ENCODE measurements at regions of chr1 and their contacts with region 1.

Region 1: DNA sequence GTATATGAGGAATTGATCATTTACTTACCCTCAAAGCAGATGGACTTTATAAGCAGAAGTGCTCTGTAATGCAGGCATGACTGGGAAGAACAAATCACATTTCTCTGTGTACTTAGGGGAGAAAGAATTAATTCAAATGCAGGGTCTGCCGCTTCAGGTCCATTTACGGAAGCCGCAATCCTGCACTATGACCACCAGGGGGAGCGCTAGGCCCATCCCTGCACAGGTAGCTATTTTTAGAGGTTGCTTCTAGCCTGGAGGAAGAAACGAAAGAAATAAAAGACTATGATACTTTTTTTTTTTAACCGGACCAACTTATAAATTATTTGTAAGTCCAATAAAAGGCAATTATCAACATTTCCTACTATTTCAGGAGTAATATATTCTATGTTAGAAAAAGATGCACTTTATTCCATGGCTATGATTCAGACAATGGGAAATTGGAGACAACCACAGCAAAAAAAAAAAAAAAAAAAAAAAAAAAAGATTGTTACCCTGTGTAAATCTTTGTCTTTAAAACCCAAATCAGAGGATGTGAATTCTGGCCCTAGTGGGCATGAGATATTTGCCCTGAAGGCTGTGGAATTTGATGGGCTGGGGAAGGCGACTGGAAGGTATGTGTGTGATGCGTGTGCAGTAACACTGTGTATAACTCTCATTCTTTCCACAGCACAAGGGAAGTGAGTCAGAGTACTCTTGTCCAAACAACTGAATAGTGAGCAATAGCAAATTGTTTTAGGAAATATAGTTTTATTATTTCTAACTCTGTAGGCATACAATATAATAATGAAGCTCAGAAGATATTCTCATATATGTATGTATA is 12.9 kb upstream of the FYB2 start:
- DNase-seq: peak; percentile 29
- ATAC-seq: peak; percentile 79
- H3K4me3 ChIP-seq: no peak overlapping the region
- H3K27ac ChIP-seq: no peak overlapping the region
- H3K4me1 ChIP-seq: peaks cover 0 to 3% of the 10 kb centered on the region in 2 experiments; a peak in 1 of 4 replicates
- H3K27me3 ChIP-seq: peaks cover 17% of the 10 kb centered on the region; the same call in 1 of the 2 replicates
- CTCF ChIP-seq: peak; percentile 65 to 96 (median 91)
- POLR2A ChIP-seq: no peak
- RAD21 ChIP-seq: peak; percentile 91

Region 2: DNA sequence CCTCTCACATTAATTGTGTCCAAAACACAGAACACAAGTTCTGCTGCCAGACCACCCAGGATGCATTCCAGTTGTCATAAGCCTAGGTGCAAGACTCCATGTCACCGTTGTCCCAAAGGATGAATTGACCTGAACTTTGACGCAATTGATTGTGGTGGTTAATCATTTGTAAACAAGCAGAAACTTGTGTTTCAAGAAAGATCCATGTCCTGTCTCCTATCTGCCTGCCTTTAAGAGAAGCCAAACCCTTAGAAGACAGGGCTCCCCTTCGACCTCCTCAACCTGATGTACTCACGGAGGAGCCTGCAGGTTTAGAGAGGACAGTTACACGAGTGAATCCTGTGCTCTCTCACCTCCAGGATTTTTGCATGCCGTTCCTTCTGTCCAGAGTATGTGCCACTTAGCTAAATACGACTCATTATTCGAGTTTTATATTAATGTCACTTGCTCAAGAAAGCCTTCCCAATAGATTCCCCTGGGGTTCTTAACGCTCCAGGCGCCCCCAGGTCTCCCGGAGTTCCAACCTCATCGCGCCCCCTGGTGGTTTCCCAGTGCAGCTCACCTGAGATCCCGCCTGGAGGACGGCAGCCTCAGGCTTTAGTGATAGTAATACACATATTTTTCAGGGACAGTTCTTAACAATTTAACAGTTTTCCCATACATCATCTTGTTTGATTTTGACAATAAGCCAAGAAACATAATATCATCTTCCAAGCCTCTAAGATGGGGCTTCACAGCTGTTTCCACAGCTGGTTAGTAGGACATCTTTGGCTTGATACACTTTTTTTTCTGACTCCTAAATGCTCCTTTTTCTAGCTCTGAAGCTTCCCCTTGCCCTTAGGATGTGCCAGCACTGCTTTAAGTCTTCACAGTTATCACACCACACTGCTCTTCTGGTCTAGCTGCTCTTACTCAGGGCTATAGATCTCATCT is 136.1 kb after region 1 on chr1:
- CTCF ChIA-PET with region 1: interaction called, 10 read pairs
- POLR2A ChIA-PET with region 1: no interaction called
- RAD21 ChIA-PET with region 1: no interaction called
- intact Hi-C with region 1: loop called (anchors 1 kb)
- DNase-seq: peak; percentile 7
- ATAC-seq: peak; percentile 69
- H3K4me3 ChIP-seq: no peak overlapping the region
- H3K27ac ChIP-seq: no peak overlapping the region
- H3K4me1 ChIP-seq: no peaks in the 10 kb centered on the region
- H3K27me3 ChIP-seq: peaks cover 8% of the 10 kb centered on the region; the same call in 1 of the 2 replicates
- CTCF ChIP-seq: peak in 2 of 3 experiments; percentile 72 to 82; a peak in 4 of 6 replicates
- POLR2A ChIP-seq: no peak
- RAD21 ChIP-seq: peak; percentile 45

Region 3: GRCh38 chr1:58047265-58047858 is 1215.3 kb after region 1 on chr1:
- CTCF ChIA-PET with region 1: no interaction called
- POLR2A ChIA-PET with region 1: no interaction called
- RAD21 ChIA-PET with region 1: no interaction called
- intact Hi-C with region 1: loop called (anchors 1 kb)
- DNase-seq: no peak
- ATAC-seq: peak; percentile 79
- H3K4me3 ChIP-seq: no peak overlapping the region
- H3K27ac ChIP-seq: no peak overlapping the region
- H3K4me1 ChIP-seq: no peaks in the 10 kb centered on the region
- H3K27me3 ChIP-seq: peaks cover 8% of the 10 kb centered on the region; the same call in 1 of the 2 replicates
- CTCF ChIP-seq: peak; percentile 20 to 82 (median 78); a peak in 5 of 6 replicates
- POLR2A ChIP-seq: no peak
- RAD21 ChIP-seq: peak; percentile 51

Region 4: GRCh38 chr1:58162952-58163550 is 1331.0 kb after region 1 on chr1:
- CTCF ChIA-PET with region 1: no interaction called
- POLR2A ChIA-PET with region 1: no interaction called
- RAD21 ChIA-PET with region 1: no interaction called
- intact Hi-C with region 1: loop called (anchors 2 kb)
- DNase-seq: peak; percentile 47
- ATAC-seq: peak; percentile 93
- H3K4me3 ChIP-seq: no peak overlapping the region
- H3K27ac ChIP-seq: no peak overlapping the region
- H3K4me1 ChIP-seq: no peaks in the 10 kb centered on the region
- H3K27me3 ChIP-seq: peaks cover 18% of the 10 kb centered on the region
- CTCF ChIP-seq: peak; percentile 23 to 92 (median 91); a peak in 4 of 6 replicates
- POLR2A ChIP-seq: no peak
- RAD21 ChIP-seq: peak; percentile 59

Measured in HCT116 (cell line).